Cardiac septum (tissue), 1 donor: ENCODE measurements at regions of chr12 and their contacts with region 1.

Region 1: GRCh38 chr12:106386813-106387535 is 29.4 kb downstream of the POLR3B start:
- DNase-seq: no peak

Region 2: DNA sequence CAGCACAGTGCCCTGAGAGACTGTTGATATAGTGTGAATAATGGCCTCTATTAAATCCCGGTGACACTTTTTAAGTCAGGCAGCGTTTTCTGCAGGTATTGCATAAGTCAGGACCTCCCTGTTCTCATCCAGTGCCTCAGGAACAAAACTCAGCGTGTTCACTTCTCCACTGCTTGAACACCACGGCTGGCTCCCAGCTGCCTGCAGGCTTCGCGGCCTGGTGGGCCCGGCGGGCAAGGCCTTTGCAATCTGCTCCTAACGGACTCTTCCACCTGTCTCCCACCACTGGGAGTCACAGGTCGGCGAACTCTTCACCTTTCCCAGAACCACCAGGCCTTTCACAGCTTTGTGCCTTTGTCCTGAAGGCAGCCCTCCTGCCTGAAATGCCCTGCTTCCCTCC is 214.5 kb after region 1 on chr12:
- intact Hi-C with region 1: no loop called
- DNase-seq: no peak

Region 3: DNA sequence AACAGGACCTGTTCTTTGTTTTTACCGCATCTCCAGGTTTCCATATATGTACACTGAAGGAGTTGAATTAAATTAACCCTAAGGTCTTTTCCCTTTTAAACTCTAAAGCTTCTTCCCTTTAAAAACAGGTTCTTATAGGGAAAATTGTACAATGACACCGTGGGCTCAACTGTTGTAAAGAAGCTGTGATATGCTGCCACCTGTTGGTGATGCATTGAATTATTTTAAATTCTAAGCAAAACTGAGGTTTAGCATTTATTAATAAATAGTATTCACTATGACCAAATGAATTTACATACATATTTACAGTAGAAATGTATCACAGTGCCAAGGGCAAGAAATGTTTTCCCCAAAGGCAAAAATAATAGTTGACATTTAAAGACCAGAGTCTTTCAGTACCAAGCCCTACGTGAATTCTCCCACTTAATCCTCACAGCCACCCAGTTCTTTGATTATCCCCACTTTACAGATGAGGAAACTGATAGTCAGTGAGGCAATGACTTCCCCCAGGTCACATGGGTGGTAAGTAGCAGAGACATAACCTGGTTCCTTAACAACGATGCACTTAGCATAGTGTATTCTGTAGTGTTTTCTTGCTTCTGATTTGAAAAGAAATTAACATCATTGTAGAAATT is 533.1 kb after region 1 on chr12:
- intact Hi-C with region 1: loop called (anchors 5 kb)
- DNase-seq: no peak

Region 4: DNA sequence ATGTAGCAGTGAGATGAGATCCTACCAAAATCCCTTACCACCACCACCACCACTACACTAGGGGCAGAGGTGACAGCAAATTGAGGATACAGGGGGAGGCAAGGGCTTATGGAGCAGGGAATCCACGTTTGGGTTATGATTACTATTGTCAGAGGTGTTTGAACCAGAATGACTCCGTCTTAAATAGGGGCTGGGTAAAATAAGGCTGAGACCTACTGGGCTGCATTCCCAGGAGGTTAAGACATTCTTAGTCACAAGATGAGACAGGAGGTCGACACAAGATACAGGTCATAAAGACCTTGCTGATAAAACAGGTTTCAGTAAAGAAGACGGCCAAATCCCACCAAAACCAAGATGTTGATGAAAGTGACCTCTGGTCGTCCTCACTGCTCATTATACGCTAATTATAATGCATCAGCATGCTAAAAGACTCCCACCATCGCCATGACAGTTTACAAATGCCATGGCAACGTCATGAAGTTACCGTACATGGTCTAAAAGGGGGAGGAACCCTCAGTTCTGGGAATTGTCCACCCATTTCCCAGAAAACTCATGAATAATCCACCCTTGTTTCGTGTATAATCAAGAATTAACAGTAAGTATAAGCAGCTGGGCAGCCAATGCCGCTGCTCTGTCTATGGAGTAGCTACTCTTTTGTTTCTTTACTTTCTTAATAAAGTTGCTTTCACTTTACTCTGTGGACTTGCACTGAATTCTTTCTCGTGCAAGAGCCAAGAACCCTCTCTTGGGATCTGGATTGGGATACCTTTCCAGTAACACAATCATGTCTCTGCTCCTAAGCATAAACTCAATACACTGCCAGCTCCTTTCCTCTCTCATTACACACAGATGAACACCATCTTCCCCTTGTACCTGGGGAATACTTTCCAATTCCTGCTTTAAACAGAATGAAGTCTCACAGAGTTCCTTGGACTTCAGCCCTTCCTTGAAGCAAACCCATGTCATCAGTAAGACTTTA is 723.1 kb after region 1 on chr12:
- intact Hi-C with region 1: loop called (anchors 5 kb)
- DNase-seq: no peak